ENCODE measurements at regions of chr4 and their contacts with region 1.

Region 1: DNA sequence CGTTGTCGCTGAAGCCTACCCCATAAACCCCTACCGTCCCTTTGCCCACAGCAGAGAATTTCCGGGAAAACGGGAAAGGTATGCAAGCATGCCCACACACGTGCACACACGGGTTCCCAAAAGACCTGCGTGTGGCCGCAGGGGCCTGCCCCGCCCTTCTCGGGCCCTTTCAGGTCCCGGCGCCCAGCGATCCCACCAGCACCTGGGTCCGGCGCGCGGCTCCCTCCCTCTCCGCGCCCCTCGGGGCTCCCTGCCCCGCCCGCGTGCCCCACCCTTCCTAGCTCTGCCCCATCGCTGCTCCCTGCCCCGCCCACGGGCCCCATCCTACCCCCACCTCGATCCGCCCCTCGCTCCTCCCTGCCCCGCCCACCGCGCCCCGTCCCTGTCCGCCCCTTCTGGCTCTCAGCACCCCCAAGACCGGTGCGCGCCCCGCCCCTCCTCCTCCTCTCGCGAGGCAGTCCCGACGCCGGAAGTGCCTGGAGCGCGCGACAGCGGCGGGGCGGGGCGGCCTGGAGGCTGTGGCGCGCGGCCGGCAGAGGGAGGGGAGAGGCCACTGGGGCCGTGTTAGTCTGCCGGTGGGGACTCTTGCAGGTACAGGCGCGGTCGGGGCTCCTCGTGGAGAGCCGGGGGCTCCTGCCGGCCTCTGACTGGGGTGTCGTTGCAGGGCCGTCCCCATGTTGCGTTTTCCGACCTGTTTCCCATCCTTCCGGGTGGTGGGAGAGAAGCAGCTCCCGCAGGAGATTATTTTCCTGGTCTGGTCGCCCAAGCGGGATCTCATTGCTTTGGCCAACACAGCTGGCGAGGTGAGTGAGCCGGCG is at the start of gene ANAPC4:
- H3K4me3 Mint-ChIP-seq: peak within 1 kb of the TSS; percentile 91
- H3K27ac Mint-ChIP-seq: peak within 1 kb of the TSS; percentile 85
- H3K4me1 Mint-ChIP-seq: no peaks in the 10 kb centered on the region
- H3K27me3 Mint-ChIP-seq: peaks cover 3% of the 10 kb centered on the region

Region 2: GRCh38 chr4:24584175-24584850 is 792.6 kb before region 1 on chr4 and contains the start of gene DHX15:
- intact Hi-C with region 1: loop called (anchors 5 kb)
- H3K4me3 Mint-ChIP-seq: peak within 1 kb of the TSS; percentile 100
- H3K27ac Mint-ChIP-seq: peak within 1 kb of the TSS; percentile 95
- H3K4me1 Mint-ChIP-seq: peaks cover 30% of the 10 kb centered on the region
- H3K27me3 Mint-ChIP-seq: no peaks in the 10 kb centered on the region

Region 3: DNA sequence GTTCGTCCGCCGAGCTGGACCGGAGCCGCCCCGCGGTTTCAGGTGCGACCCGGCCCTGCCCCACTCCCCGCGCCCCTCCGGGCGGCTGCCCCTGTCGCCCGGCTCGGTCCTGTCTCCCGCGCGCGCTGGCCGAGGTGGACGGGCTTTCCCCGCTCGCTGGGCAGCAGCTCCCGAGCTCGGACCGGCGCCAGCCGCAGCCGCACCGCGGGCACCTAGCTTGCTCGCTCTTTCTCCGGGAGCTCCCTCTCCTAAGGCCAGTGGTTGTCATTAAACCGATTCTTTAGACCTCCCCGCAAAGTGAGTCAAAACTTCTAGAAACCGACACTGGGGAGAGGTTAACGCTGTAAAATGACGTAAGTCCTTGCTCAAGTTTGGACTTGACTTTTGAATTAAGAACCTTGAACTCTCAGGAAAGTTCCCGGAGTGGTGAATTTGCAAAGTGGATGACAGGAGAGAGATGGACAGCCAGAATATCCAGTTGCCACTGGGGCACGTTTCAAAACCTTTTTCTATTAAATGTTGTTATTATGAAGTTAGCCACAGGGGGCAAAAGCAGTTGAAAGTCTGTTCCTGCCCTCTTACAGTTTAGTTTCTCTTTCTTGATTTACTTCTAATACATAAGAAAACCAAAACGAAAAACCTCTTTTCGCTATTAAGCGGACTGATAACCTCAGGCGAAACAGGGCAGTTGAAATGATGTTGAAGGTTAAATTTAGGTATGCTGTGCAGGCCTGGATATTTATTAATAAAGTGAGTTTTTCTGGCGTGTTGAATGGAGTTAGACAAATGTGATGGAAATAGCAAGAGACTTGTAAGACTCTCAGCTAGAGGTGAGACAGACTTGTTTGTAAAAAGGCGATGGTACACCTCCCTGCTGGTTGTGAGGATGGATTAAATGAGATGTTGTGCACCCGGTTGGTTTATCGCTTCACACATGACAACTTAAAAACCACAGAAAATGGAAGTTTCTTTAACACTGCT is 142.3 kb before region 1 on chr4:
- intact Hi-C with region 1: loop called (anchors 5 kb)
- H3K4me3 Mint-ChIP-seq: peak overlapping the region; percentile 94
- H3K27ac Mint-ChIP-seq: peak overlapping the region; percentile 90
- H3K4me1 Mint-ChIP-seq: peaks cover 17% of the 10 kb centered on the region
- H3K27me3 Mint-ChIP-seq: no peaks in the 10 kb centered on the region

Region 4: GRCh38 chr4:25312496-25313200 is 64.3 kb before region 1 on chr4 and contains the start of gene ZCCHC4:
- intact Hi-C with region 1: loop called (anchors 1 kb)
- H3K4me3 Mint-ChIP-seq: peak within 1 kb of the TSS; percentile 98
- H3K27ac Mint-ChIP-seq: peak within 1 kb of the TSS; percentile 91
- H3K4me1 Mint-ChIP-seq: peaks cover 39% of the 10 kb centered on the region
- H3K27me3 Mint-ChIP-seq: no peaks in the 10 kb centered on the region

Region 5: GRCh38 chr4:25330905-25331808 is 45.8 kb before region 1 on chr4:
- intact Hi-C with region 1: no loop called
- H3K4me3 Mint-ChIP-seq: no peak overlapping the region
- H3K27ac Mint-ChIP-seq: peak overlapping the region; percentile 21
- H3K4me1 Mint-ChIP-seq: peaks cover 11% of the 10 kb centered on the region
- H3K27me3 Mint-ChIP-seq: no peaks in the 10 kb centered on the region

Measured in dendritic cell treated with granulocyte-macrophage colony-stimulating factor and Interleukin-4, amounts not matched to agents 40 ng/mL and 50 ng/mL, for 4 days (primary cell).